Panc1 (cell line): ENCODE measurements at regions of chr3 and their contacts with region 1.

Region 1: GRCh38 chr3:160686955-160687535 is 10.1 kb downstream of the ARL14 start:
- DNase-seq: no peak
- ATAC-seq: 0 out of 2 replicates have a peak, but pooled peaks have one; percentile 59
- H3K4me3 ChIP-seq: no peak overlapping the region
- H3K27ac ChIP-seq: no peak overlapping the region
- H3K4me1 ChIP-seq: peaks cover 9% of the 10 kb centered on the region; the same call in 1 of the 2 replicates
- H3K27me3 ChIP-seq: no peaks in the 10 kb centered on the region
- CTCF ChIP-seq: peak; percentile 60; the same call in 1 of the 2 replicates

Region 2: DNA sequence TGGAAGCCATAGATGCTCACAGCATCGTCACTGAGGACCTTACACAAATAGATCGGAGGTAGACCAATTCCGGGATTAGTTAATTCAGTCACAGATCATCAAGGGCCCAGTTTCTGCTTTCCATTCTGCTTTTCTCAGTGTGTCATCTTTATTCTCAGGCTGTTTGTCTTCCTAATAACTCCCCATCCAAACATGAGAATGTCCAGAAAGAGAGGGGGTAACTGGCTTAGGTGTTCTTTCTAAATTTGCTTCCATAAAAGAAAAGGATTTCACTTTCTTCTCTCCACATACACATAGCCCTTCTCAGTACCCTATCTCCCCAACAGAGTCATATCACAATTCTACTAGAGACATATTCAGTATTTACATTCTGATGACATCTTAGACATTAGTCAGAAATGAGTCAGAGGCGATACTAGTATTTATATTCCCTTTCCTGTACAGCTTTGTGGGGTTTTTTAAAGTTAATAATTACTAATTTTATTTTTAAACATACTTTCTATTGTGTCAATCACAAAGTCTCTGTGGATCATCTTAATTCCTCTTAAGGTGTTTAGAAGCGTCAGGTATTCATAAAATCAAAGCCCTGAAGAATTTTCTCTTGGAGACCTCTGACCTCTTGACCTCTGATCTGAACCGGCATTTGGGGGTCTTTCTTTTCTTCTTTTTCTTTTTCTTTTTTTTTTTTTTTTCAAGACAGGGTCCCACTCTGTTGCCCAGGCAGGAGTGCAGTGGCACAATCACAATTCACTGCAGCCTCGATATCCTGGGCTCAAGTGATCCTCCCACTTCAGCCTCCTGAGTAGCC is 722.7 kb before region 1 on chr3:
- CTCF ChIA-PET with region 1: no interaction called
- POLR2A ChIA-PET with region 1: interaction called, 11 read pairs
- in situ Hi-C with region 1: no loop called
- intact Hi-C with region 1: no loop called
- DNase-seq: peak; percentile 59
- ATAC-seq: peak; percentile 65; the same call in 1 of the 2 replicates
- H3K4me3 ChIP-seq: no peak overlapping the region
- H3K27ac ChIP-seq: no peak overlapping the region
- H3K4me1 ChIP-seq: no peaks in the 10 kb centered on the region
- H3K27me3 ChIP-seq: no peaks in the 10 kb centered on the region
- CTCF ChIP-seq: no peak